PC-3 (cell line): ENCODE measurements at regions of chr11 and their contacts with region 1.

Region 1: DNA sequence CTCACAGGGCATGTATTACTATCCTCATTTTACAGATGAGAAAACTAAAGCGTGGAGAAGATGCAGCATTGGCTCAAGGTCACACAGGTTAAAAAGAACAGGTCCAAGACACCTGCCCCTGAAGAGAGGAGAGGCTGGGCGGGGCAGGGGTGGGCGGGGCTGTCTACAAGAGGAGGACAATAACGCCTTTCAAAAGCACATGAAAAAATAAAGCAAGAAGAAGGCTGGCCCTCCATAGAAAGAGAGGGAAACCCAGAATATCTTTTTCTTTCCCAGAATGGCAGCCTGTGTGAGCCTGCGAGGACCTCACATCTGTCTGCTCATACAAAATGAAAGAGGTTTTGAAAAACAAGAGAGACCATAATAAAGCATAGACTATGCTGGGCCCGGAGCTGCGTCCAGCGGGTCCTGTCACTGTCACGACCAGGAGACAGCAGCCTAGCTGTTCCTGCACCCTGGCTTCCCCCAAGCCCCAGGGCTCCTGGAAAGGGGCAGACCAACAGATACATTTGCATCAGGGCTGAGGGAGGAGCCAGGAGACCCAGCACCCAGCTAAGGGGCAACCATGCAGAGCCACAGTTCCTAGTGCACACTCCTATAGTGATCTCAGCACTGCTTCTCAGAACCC is 61.6 kb downstream of the DSCAML1 start:
- DNase-seq: no peak
- ATAC-seq: no peak
- H3K4me3 ChIP-seq: no peak overlapping the region
- H3K27ac ChIP-seq: no peak overlapping the region
- H3K4me1 ChIP-seq: no peaks in the 10 kb centered on the region
- H3K27me3 ChIP-seq: peaks cover 75% of the 10 kb centered on the region
- CTCF ChIP-seq: no peak

Region 2: GRCh38 chr11:117759305-117759704 is 23.8 kb after region 1 on chr11:
- CTCF ChIA-PET with region 1: no interaction called
- POLR2A ChIA-PET with region 1: no interaction called
- intact Hi-C with region 1: no loop called
- DNase-seq: no peak
- ATAC-seq: no peak
- H3K4me3 ChIP-seq: no peak overlapping the region
- H3K27ac ChIP-seq: no peak overlapping the region
- H3K4me1 ChIP-seq: no peaks in the 10 kb centered on the region
- H3K27me3 ChIP-seq: peaks cover 77% of the 10 kb centered on the region
- CTCF ChIP-seq: no peak

Region 3: GRCh38 chr11:117907251-117907981 is 172.0 kb after region 1 on chr11:
- CTCF ChIA-PET with region 1: no interaction called
- POLR2A ChIA-PET with region 1: no interaction called
- intact Hi-C with region 1: no loop called
- DNase-seq: peak; percentile 89
- ATAC-seq: peak; percentile 84
- H3K4me3 ChIP-seq: no peak overlapping the region
- H3K27ac ChIP-seq: 0 out of 2 replicates have a peak overlapping the region, but pooled peaks have one; percentile 1
- H3K4me1 ChIP-seq: peaks cover 5% of the 10 kb centered on the region
- H3K27me3 ChIP-seq: peaks cover 44% of the 10 kb centered on the region
- CTCF ChIP-seq: no peak

Region 4: DNA sequence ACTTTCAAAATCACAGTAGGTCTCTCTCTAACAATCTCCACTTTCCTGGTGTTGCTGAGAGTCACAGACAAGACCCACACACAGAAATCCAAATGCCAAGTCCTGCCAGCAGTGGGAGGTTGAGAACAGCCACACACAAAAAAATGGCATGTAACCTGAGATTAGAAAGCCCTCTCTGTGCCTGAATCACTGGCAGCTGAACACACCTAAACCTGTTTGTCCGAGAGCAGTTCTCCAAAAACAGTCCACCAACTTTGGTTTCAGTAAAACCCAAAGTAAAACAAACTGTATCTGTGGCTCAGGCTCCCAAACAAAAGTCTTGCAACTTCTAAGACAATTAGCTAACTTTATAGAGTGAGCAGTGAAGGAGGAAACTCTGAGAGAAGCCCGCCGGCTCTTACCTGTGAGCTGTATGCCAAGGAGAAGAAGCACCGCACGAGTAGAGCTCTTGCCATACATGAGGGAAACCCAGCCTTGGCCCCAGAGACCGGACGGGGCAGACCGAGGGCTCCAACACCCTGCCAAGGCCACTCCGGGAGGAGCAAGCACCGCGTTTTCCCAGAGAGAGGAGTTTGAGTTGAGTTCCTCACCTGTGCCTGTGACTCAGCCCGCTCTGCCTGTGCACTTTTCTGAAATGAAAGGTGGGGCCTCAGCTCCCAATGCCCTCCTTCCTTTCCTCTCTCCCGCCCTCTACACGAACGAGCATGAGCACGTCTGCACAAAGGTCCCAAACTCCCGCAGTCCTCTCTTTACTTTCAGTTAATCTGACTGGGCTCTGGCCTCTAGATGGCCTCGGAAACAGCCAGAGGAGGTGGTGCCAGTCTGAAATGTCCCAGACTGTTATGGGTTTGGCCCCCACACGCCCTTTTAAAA is 528.5 kb after region 1 on chr11 and contains the start of gene MPZL2:
- CTCF ChIA-PET with region 1: no interaction called
- POLR2A ChIA-PET with region 1: interaction called, 10 read pairs
- intact Hi-C with region 1: no loop called
- DNase-seq: peak; percentile 95
- ATAC-seq: peak; percentile 91
- H3K4me3 ChIP-seq: peak within 1 kb of the TSS; percentile 82
- H3K27ac ChIP-seq: peak within 1 kb of the TSS; percentile 94
- H3K4me1 ChIP-seq: peaks cover 28% of the 10 kb centered on the region
- H3K27me3 ChIP-seq: no peaks in the 10 kb centered on the region
- CTCF ChIP-seq: peak; percentile 46
- total RNA-seq, gene MPZL2: 40.6 and 51.5 TPM in 2 replicates